Activated B cell treated with CpG ODN at 0.5 μM for 24 hours (primary cell): ENCODE measurements at regions of chr6 and their contacts with region 1.

Region 1: GRCh38 chr6:37791156-37791919 is 28.2 kb upstream of the ZFAND3 start:
- DNase-seq: peak; percentile 66
- ATAC-seq: peak; percentile 100
- H3K4me3 Mint-ChIP-seq: no peak overlapping the region
- H3K27ac Mint-ChIP-seq: no peak overlapping the region
- H3K4me1 Mint-ChIP-seq: peaks cover 7% of the 10 kb centered on the region
- H3K27me3 Mint-ChIP-seq: no peaks in the 10 kb centered on the region
- CTCF ChIP-seq: peak; percentile 73

Region 2: GRCh38 chr6:37565267-37566110 is 225.8 kb before region 1 on chr6:
- CTCF ChIA-PET with region 1: no interaction called
- POLR2A ChIA-PET with region 1: no interaction called
- intact Hi-C with region 1: no loop called
- DNase-seq: no peak
- ATAC-seq: no peak
- H3K4me3 Mint-ChIP-seq: peak overlapping the region; percentile 60
- H3K27ac Mint-ChIP-seq: peak overlapping the region; percentile 7
- H3K4me1 Mint-ChIP-seq: peaks cover 68% of the 10 kb centered on the region
- H3K27me3 Mint-ChIP-seq: no peaks in the 10 kb centered on the region
- CTCF ChIP-seq: no peak

Region 3: DNA sequence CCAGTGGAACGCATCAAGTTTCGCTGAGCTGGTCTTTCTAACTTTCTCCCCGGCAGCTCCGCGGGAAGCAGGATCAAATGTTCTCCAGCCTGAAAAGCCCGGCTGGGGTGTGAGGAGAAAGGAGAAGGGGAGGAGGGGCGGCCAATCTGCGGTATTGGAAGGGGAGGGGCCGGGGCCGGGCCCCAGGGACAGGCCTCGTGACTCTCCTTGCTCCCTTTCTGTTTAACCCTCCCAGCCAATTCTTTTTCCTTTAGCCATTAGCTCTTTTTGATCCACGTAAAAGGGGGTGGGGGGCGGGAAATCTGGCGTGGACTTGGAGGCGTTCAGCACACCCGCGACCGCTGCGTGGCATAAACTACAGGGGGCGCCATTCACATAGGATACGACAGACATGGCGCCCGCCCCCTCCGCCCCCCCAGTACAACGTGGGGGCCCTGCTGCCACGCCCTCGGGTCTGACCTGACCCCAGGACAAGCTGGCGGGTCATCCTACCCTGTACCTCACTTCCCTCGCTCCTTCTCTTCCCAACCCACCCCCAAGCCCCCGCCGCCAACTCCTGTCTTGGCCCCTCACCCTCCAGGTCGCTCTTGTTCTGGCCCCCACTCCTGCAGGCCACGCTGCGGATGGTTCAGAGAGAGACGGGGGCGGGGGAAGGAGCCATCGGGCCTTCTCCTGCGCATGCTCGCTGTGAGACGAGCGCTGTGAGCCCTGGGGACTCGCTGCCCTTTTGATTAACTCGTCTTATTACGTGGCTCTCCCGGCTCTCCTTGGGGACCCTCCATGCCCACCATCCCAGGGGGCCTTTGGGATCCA is 85.9 kb before region 1 on chr6:
- CTCF ChIA-PET with region 1: no interaction called
- POLR2A ChIA-PET with region 1: no interaction called
- intact Hi-C with region 1: loop called (anchors 1 kb)
- DNase-seq: peak; percentile 72
- ATAC-seq: peak; percentile 91
- H3K4me3 Mint-ChIP-seq: peak overlapping the region; percentile 86
- H3K27ac Mint-ChIP-seq: peak overlapping the region; percentile 71
- H3K4me1 Mint-ChIP-seq: peaks cover 24% of the 10 kb centered on the region
- H3K27me3 Mint-ChIP-seq: no peaks in the 10 kb centered on the region
- CTCF ChIP-seq: no peak

Region 4: DNA sequence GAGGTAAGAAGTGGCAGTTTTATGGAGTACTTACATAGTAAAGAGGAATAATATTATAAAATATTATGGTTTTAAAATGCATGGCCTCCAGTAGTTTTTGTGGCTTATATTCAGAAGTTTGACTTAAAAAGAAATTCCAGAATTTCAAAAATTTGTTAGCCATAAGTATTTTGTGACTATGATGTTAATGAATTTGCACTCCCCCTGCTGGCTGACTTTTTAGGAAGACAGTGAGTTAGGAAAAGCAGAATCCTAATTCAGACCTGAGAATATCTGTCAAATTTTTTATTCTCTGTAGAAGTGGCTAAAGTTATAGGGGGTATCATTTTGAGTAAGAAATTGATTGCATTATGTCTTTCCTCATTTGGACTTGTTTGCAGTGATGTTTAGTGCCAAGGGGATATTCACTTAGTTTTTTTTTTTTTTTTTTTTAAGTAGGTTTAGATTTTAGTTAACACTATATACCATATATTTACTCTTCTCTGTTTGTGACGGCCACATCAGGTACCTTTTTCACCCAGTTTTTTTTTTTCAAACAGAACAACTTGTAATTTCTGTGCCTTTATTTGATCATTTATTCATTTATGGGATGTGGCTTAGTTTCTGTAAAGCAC is 69.0 kb after region 1 on chr6:
- CTCF ChIA-PET with region 1: interaction called, 9 read pairs
- POLR2A ChIA-PET with region 1: no interaction called
- intact Hi-C with region 1: loop called (anchors 1 kb)
- DNase-seq: no peak
- ATAC-seq: no peak
- H3K4me3 Mint-ChIP-seq: no peak overlapping the region
- H3K27ac Mint-ChIP-seq: no peak overlapping the region
- H3K4me1 Mint-ChIP-seq: peaks cover 31% of the 10 kb centered on the region
- H3K27me3 Mint-ChIP-seq: no peaks in the 10 kb centered on the region
- CTCF ChIP-seq: no peak

Region 5: DNA sequence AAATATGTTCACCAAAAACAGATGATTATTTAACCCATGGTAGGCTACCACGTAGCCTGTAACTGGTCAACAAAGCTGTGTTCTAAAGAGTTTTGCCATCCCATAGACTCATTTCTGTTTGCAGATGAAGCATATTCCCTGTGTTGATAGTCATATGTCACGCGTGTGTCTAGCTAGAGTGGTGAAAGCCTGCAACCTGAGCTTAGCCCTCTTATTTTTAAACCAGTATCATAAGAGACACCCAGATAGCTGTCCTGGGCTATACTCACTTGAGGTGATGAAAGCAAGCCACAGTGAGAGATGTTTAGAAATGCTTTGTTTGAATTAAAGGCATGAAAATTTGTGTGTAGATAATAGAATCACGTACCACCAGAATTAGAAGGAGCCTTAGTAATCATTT is 335.9 kb after region 1 on chr6:
- CTCF ChIA-PET with region 1: no interaction called
- POLR2A ChIA-PET with region 1: no interaction called
- intact Hi-C with region 1: loop called (anchors 10 kb)
- DNase-seq: no peak
- ATAC-seq: no peak
- H3K4me3 Mint-ChIP-seq: no peak overlapping the region
- H3K27ac Mint-ChIP-seq: no peak overlapping the region
- H3K4me1 Mint-ChIP-seq: peaks cover 2% of the 10 kb centered on the region
- H3K27me3 Mint-ChIP-seq: no peaks in the 10 kb centered on the region
- CTCF ChIP-seq: no peak